ENCODE measurements at regions of chr1 and their contacts with region 1.

Region 1: GRCh38 chr1:26233903-26234643 is at the start of gene CEP85:
- DNase-seq: peak; percentile 99
- ATAC-seq: peak; percentile 96
- H3K4me3 Mint-ChIP-seq: peak within 1 kb of the TSS; percentile 97
- H3K27ac Mint-ChIP-seq: peak within 1 kb of the TSS; percentile 93
- H3K4me1 Mint-ChIP-seq: peaks cover 35% of the 10 kb centered on the region
- H3K27me3 Mint-ChIP-seq: no peaks in the 10 kb centered on the region
- total RNA-seq, gene CEP85: 48.7 to 49.1 TPM

Region 2: DNA sequence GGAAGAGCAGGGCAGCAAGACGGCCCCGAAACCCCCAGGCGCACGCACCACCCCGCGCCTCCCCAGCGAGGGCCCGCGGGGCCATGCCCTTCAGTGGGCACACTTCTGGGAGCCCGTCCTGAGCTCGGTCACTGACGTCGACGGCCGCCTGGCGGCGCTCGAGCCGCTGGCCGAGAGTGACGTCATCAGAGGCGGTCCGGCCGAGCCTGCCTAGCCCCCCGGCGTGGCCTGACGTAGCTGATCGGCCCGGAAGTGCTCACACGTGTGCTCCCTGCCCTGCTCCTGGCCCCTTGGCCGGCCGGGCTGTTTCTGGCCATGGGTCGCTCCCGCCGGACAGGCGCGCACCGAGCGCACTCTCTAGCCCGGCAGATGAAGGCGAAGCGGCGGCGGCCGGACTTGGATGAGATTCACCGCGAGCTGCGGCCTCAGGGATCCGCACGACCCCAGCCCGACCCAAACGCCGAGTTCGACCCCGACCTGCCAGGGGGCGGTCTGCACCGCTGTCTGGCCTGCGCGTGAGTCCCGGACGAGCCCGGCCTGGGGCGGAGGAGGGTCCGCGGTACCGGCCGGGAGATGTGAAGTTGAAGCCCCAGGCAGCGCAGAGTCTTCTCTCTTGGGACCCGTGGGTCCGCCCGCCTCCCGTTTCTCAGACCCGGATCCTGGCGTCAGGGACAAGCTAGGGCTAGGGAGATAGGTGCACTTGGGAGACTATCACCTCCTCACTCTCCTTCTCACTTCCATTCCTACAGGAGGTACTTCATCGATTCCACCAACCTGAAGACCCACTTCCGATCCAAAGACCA is 64.2 kb before region 1 on chr1 and contains the start of gene ZNF593:
- CTCF ChIA-PET with region 1: interaction called, 69 read pairs
- POLR2A ChIA-PET with region 1: interaction called, 6 read pairs
- DNase-seq: peak; percentile 92
- ATAC-seq: peak; percentile 95
- H3K4me3 Mint-ChIP-seq: peak within 1 kb of the TSS; percentile 89
- H3K27ac Mint-ChIP-seq: peak within 1 kb of the TSS; percentile 89
- H3K4me1 Mint-ChIP-seq: peaks cover 25% of the 10 kb centered on the region
- H3K27me3 Mint-ChIP-seq: peaks cover 9% of the 10 kb centered on the region
- total RNA-seq, gene ZNF593: 28.4 to 31.1 TPM

Region 3: GRCh38 chr1:26210147-26210870 is 23.8 kb before region 1 on chr1:
- CTCF ChIA-PET with region 1: interaction called, 34 read pairs
- POLR2A ChIA-PET with region 1: no interaction called
- DNase-seq: no peak
- ATAC-seq: no peak
- H3K4me3 Mint-ChIP-seq: no peak overlapping the region
- H3K27ac Mint-ChIP-seq: no peak overlapping the region
- H3K4me1 Mint-ChIP-seq: no peaks in the 10 kb centered on the region
- H3K27me3 Mint-ChIP-seq: peaks cover 15% of the 10 kb centered on the region

Region 4: DNA sequence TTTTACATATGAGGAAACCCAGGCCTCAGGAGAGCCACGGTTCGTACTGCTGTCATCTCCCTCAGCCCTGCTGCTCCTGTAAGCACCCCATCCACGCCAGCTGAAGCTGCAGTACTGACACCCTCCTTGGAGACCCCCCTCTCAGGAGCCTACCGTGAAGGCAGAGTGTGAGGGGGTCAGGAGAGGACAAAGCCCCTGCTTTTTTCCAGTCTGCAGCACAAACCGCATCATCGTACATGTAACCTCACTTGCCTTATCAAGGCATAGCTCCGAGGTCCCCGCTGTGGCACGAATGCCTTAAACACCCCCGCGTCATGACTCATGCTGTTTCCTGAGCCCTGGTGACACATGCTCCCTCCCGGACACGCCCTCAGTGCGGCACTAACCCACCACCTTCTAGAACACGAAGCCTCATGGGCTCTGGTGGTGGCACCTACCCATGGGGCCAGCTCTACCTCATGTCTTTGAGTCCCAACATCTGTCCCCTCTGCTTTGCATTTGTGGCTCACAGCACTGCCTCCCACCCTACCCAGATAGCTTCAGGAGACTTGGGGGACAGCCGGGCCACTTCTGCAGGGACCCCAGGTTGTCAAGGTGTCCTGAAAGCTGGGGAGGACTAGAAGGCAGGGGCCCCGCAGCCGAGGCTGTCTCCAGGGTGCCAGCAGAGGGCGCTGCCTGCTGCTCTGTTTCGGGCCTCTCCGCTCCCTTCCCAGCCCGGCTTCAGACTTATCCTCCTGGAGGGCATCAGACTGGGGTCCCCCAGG is 50.7 kb after region 1 on chr1:
- CTCF ChIA-PET with region 1: interaction called, 74 read pairs
- POLR2A ChIA-PET with region 1: interaction called, 5 read pairs
- DNase-seq: peak; percentile 97
- ATAC-seq: peak; percentile 74
- H3K4me3 Mint-ChIP-seq: peak overlapping the region; percentile 89
- H3K27ac Mint-ChIP-seq: peak overlapping the region; percentile 96
- H3K4me1 Mint-ChIP-seq: peaks cover 89% of the 10 kb centered on the region
- H3K27me3 Mint-ChIP-seq: no peaks in the 10 kb centered on the region

Region 5: DNA sequence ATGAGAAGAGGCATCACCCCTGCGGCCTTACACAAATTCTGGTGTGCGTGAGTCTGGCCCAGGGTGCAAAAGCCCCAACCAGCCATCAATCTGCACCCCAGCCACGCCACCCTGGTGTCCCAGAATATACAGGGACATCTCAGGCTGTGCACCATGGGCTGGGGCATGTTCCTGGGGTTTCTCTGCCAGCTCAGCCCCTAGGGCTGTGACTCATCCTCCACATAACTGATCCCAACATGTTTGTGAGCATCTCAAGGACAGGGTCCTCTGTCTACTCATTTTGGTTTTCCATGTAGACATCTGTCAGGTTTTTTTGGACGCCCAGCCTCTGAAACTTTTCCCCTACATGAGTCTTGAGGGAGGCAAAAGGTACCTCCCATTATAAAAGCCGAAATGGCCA is 138.0 kb after region 1 on chr1:
- CTCF ChIA-PET with region 1: interaction called, 10 read pairs
- POLR2A ChIA-PET with region 1: no interaction called
- DNase-seq: no peak
- ATAC-seq: no peak
- H3K4me3 Mint-ChIP-seq: no peak overlapping the region
- H3K27ac Mint-ChIP-seq: peak overlapping the region; percentile 90
- H3K4me1 Mint-ChIP-seq: peaks cover 87% of the 10 kb centered on the region
- H3K27me3 Mint-ChIP-seq: peaks cover 2% of the 10 kb centered on the region